Naive thymus-derived CD4-positive, alpha-beta T cell (primary cell): ENCODE measurements at regions of chr2 and their contacts with region 1.

Region 1: DNA sequence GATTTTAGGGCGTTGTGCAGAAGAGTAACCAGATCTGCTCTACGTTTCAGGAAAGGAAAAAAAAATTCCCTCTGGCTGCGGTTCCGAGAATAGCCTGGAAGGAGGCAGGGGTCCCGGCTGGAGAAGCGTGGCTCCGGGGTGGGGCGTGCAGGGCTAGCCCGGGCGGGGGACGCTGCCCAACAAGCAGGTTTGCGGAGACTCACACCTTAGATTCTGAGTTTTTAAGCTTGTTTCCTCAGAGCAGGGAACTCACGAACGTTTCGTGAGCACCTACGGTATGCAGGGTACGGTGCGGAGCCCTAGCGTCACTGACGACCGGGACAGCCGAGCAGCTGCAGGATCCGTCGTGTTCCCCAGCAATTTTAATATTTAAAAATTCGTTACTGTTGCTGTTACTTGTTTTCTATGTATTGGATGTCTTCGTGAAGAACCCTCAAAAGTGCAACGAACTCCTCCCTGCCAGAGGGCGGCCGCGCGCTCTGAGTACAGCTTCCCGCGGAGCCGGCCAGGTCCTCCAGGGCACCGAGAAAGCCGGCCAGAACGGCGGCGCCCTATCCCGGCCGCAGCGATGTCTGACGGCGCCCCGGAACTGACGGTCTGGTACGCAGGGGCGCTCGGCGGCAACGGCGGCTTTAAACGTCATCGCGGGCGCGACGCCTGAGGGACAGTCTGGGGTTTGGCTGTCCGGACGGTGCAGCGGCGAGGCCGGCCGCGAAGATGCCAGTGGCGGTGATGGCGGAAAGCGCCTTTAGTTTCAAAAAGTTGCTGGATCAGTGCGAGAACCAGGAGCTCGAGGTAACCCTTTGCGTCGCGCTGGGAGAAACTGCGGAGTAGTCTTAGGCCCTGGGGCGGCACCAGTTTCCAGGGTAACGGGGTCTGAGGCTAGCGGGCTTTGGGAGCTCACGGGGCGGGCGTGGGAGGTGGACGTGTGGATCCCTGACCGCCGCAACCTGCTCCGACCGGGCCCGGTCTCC is at the start of gene COPS8:
- DNase-seq: peak; percentile 82 to 93 (median 89)
- ATAC-seq: peak; percentile 99
- H3K4me3 ChIP-seq: peak within 1 kb of the TSS; percentile 95
- H3K4me3 Mint-ChIP-seq: peak within 1 kb of the TSS; percentile 95 to 100 (median 99)
- H3K27ac ChIP-seq: peak within 1 kb of the TSS; percentile 83
- H3K27ac Mint-ChIP-seq: peak within 1 kb of the TSS; percentile 94 to 99 (median 99)
- H3K4me1 ChIP-seq: peaks cover 8 to 15% of the 10 kb centered on the region in 2 donors
- H3K4me1 Mint-ChIP-seq: peaks cover 23 to 52% (median 28%) of the 10 kb centered on the region in 7 donors
- H3K27me3 ChIP-seq: no peaks in the 10 kb centered on the region
- H3K27me3 Mint-ChIP-seq: no peaks in the 10 kb centered on the region
- total RNA-seq, gene COPS8: 31.2 to 46.4 (median 40.8) TPM

Region 2: DNA sequence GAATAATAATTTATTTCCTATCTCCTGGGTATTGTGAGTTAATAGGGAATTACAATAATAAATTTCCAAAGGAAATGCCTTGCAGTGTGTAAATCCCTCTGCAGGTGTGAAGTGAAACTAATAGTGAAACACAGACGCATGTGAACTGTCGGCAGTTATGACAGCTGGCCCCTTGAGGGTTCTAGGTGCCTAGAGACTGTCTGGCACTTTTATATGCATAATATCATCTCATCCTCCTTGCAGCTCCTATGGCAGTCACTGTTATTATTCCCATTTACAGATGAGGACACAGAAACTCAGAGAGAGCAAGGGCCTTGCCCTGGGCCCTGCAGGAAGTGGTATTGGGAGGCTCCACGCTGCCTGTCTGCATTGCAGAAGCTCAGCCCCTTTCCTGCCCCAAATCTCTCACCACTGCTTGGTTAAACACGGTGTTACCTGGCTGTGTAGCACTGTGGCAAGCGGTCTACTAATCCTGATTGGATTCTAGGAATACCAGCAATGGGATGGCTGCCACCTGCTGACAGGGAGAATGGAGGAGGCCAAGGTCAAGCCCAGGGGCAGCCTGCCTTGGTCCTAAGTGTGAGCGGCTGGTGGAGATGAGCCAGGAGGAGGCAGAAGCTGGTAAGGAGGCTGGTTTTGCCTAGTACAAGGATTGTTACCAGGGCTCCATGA is 548.7 kb before region 1 on chr2:
- CTCF ChIA-PET with region 1: no interaction called
- POLR2A ChIA-PET with region 1: no interaction called
- intact Hi-C with region 1: loop called (anchors 5 to 10 kb)
- DNase-seq: peak; percentile 30 to 73 (median 65)
- ATAC-seq: peak; percentile 92
- H3K4me3 ChIP-seq: peak overlapping the region; percentile 79
- H3K4me3 Mint-ChIP-seq: peak overlapping the region; percentile 92 to 100 (median 98)
- H3K27ac ChIP-seq: peak overlapping the region; percentile 81
- H3K27ac Mint-ChIP-seq: peak overlapping the region; percentile 90 to 99 (median 97)
- H3K4me1 ChIP-seq: peaks cover 20 to 27% of the 10 kb centered on the region in 2 donors
- H3K4me1 Mint-ChIP-seq: peaks cover 43 to 59% (median 55%) of the 10 kb centered on the region in 7 donors
- H3K27me3 ChIP-seq: no peaks in the 10 kb centered on the region
- H3K27me3 Mint-ChIP-seq: peaks cover 0 to 5% (median 0%) of the 10 kb centered on the region in 5 donors

Region 3: DNA sequence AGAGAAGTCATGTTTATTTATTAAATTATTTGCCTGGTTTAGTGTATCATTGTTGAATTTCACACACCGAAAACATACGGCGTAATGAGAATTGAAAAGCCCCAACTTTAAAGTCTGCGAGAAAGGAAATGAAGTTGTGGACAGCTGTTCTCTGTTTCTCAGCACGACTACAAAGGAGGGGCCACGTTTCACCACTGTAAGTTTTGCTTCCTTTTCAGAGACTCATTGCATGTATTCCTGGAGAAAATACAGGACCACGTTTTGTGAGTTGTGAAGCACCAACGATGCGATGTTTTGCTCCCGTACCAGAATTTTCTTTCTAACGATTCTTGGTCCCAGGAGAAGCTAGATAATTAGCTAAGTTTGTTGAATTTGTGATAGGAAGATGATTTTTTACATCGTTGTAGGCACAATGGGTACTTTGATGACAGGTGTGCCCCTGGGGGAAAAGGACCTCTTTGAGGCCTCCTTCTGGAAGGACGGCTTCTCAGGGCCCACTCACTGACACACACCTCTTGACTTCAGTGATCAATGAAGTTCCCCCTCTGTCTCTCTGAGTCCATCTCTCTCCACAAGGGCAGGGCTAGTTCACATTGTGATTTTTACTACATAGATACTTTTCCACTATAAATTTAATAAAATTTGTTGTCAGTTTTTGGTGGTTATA is 539.6 kb before region 1 on chr2:
- CTCF ChIA-PET with region 1: no interaction called
- POLR2A ChIA-PET with region 1: no interaction called
- intact Hi-C with region 1: loop called in 1 of 2 experiments (anchors 10 kb)
- DNase-seq: peak in 3 of 9 donors; percentile 23 to 36 (median 32)
- ATAC-seq: peak; percentile 74
- H3K4me3 ChIP-seq: peak overlapping the region; percentile 34
- H3K4me3 Mint-ChIP-seq: peak overlapping the region; percentile 49 to 85 (median 68)
- H3K27ac ChIP-seq: peak overlapping the region; percentile 72
- H3K27ac Mint-ChIP-seq: peak overlapping the region; percentile 77 to 96 (median 92)
- H3K4me1 ChIP-seq: peaks cover 60% of the 10 kb centered on the region in 2 donors
- H3K4me1 Mint-ChIP-seq: peaks cover 71 to 97% (median 95%) of the 10 kb centered on the region in 7 donors
- H3K27me3 ChIP-seq: no peaks in the 10 kb centered on the region
- H3K27me3 Mint-ChIP-seq: no peaks in the 10 kb centered on the region

Region 4: GRCh38 chr2:236968101-236968879 is 117.2 kb before region 1 on chr2:
- CTCF ChIA-PET with region 1: no interaction called
- POLR2A ChIA-PET with region 1: interaction called, 3 read pairs
- intact Hi-C with region 1: loop called in 1 of 2 experiments (anchors 1 kb)
- DNase-seq: peak in 7 of 9 donors; percentile 71 to 87 (median 82)
- ATAC-seq: peak; percentile 93
- H3K4me3 ChIP-seq: peak overlapping the region; percentile 38
- H3K4me3 Mint-ChIP-seq: peak overlapping the region; percentile 73 to 92 (median 78)
- H3K27ac ChIP-seq: peak overlapping the region; percentile 85
- H3K27ac Mint-ChIP-seq: peak overlapping the region; percentile 80 to 99 (median 95)
- H3K4me1 ChIP-seq: peaks cover 16 to 41% of the 10 kb centered on the region in 2 donors
- H3K4me1 Mint-ChIP-seq: peaks cover 21 to 63% (median 41%) of the 10 kb centered on the region in 7 donors
- H3K27me3 ChIP-seq: no peaks in the 10 kb centered on the region
- H3K27me3 Mint-ChIP-seq: peaks cover 0 to 4% (median 0%) of the 10 kb centered on the region in 5 donors

Region 5: GRCh38 chr2:237060534-237061312 is 24.8 kb before region 1 on chr2:
- CTCF ChIA-PET with region 1: no interaction called
- POLR2A ChIA-PET with region 1: no interaction called
- intact Hi-C with region 1: no loop called
- DNase-seq: peak in 6 of 9 donors; percentile 15 to 34 (median 31)
- ATAC-seq: no peak
- H3K4me3 ChIP-seq: no peak overlapping the region
- H3K4me3 Mint-ChIP-seq: no peak overlapping the region
- H3K27ac ChIP-seq: no peak overlapping the region
- H3K27ac Mint-ChIP-seq: peak overlapping the region in 3 of 9 donors; percentile 22 to 70 (median 46)
- H3K4me1 ChIP-seq: no peaks in the 10 kb centered on the region
- H3K4me1 Mint-ChIP-seq: peaks cover 0 to 11% (median 0%) of the 10 kb centered on the region in 7 donors
- H3K27me3 ChIP-seq: no peaks in the 10 kb centered on the region
- H3K27me3 Mint-ChIP-seq: peaks cover 0 to 6% (median 0%) of the 10 kb centered on the region in 5 donors

Region 6: DNA sequence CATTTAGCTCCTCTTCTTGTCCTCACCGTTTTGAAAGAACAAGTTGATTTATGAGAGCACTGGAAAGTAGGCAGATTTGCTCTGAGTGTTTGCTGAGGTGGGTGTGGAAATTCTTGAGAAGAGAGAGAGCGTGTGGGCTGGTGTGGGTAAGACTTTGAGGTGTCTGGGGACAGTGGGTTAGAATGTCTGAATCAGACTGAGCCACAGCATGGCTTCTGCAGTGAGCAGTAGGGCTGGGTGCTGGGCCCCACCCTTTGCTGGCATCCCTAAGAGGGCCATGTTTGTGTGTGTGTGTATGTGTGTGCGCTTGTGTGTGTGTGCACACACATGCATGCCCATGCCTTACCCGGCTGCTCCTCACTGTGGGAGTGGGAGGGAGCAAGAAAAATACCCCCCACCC is 63.9 kb after region 1 on chr2:
- CTCF ChIA-PET with region 1: no interaction called
- POLR2A ChIA-PET with region 1: no interaction called
- intact Hi-C with region 1: no loop called
- DNase-seq: peak in 1 of 9 donors; percentile 60
- ATAC-seq: no peak
- H3K4me3 ChIP-seq: no peak overlapping the region
- H3K4me3 Mint-ChIP-seq: no peak overlapping the region
- H3K27ac ChIP-seq: no peak overlapping the region
- H3K27ac Mint-ChIP-seq: peak overlapping the region in 2 of 9 donors; percentile 8 to 10
- H3K4me1 ChIP-seq: no peaks in the 10 kb centered on the region
- H3K4me1 Mint-ChIP-seq: peaks cover 0 to 13% (median 0%) of the 10 kb centered on the region in 7 donors
- H3K27me3 ChIP-seq: no peaks in the 10 kb centered on the region
- H3K27me3 Mint-ChIP-seq: no peaks in the 10 kb centered on the region

Region 7: GRCh38 chr2:237201461-237202287 is 116.1 kb after region 1 on chr2:
- CTCF ChIA-PET with region 1: no interaction called
- POLR2A ChIA-PET with region 1: no interaction called
- intact Hi-C with region 1: no loop called
- DNase-seq: no peak
- ATAC-seq: peak; percentile 12
- H3K4me3 ChIP-seq: no peak overlapping the region
- H3K4me3 Mint-ChIP-seq: no peak overlapping the region
- H3K27ac ChIP-seq: no peak overlapping the region
- H3K27ac Mint-ChIP-seq: no peak overlapping the region
- H3K4me1 ChIP-seq: no peaks in the 10 kb centered on the region
- H3K4me1 Mint-ChIP-seq: no peaks in the 10 kb centered on the region
- H3K27me3 ChIP-seq: no peaks in the 10 kb centered on the region
- H3K27me3 Mint-ChIP-seq: peaks cover 0 to 9% (median 4%) of the 10 kb centered on the region in 5 donors